Aorta (tissue), 5 donors: ENCODE measurements at regions of chr10 and their contacts with region 1.

Region 1: GRCh38 chr10:93993782-93994437 is at the start of gene PLCE1:
- DNase-seq: peak; percentile 73 to 88
- ATAC-seq: peak; percentile 81
- H3K4me3 ChIP-seq: peak within 1 kb of the TSS; percentile 28 to 59
- H3K27ac ChIP-seq: peak within 1 kb of the TSS in 1 of 2 donors; percentile 12
- H3K4me1 ChIP-seq: no peaks in the 10 kb centered on the region
- H3K27me3 ChIP-seq: no peaks in the 10 kb centered on the region
- total RNA-seq, gene PLCE1: 14.7 to 16.6 TPM

Region 2: GRCh38 chr10:93941606-93942005 is 52.3 kb before region 1 on chr10:
- intact Hi-C with region 1: no loop called
- DNase-seq: no peak
- ATAC-seq: no peak
- H3K4me3 ChIP-seq: no peak overlapping the region
- H3K27ac ChIP-seq: no peak overlapping the region
- H3K4me1 ChIP-seq: peaks cover 0 to 2% of the 10 kb centered on the region in 2 donors
- H3K27me3 ChIP-seq: no peaks in the 10 kb centered on the region

Region 3: GRCh38 chr10:94052866-94053791 is 59.2 kb after region 1 on chr10:
- intact Hi-C with region 1: loop called in 1 of 2 experiments (anchors 10 kb)
- DNase-seq: no peak
- ATAC-seq: no peak
- H3K4me3 ChIP-seq: peak overlapping the region in 1 of 2 donors; percentile 10
- H3K27ac ChIP-seq: no peak overlapping the region
- H3K4me1 ChIP-seq: peaks cover 0 to 2% of the 10 kb centered on the region in 2 donors
- H3K27me3 ChIP-seq: no peaks in the 10 kb centered on the region

Region 4: DNA sequence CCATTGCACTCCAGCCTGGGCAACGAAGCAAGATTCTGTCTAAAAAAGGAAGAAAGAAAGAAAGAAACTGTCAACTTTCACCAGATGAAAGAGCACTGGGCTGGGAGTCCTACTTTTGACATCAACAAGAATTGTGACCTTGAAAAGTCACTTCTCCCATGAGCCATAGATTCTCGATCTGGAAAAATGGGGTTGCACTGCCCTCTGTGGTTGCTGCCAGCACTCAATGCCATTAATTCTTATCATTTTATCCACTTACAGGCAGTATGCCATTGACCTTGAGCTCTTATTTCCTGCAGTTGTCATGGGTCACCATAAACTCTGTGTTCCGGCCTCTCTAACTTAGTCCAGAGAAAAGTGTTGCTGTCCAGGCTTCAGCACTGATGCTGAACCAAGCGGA is 231.7 kb after region 1 on chr10:
- intact Hi-C with region 1: loop called (anchors 10 kb)
- DNase-seq: no peak
- ATAC-seq: no peak
- H3K4me3 ChIP-seq: no peak overlapping the region
- H3K27ac ChIP-seq: peak overlapping the region in 1 of 2 donors; percentile 23
- H3K4me1 ChIP-seq: no peaks in the 10 kb centered on the region
- H3K27me3 ChIP-seq: no peaks in the 10 kb centered on the region